ENCODE measurements at regions of chr1 and their contacts with region 1.

Region 1: GRCh38 chr1:88180449-88181108 is 503.5 kb upstream of the PKN2 start:
- DNase-seq: peak; percentile 54
- ATAC-seq: peak; percentile 95 to 96

Region 2: DNA sequence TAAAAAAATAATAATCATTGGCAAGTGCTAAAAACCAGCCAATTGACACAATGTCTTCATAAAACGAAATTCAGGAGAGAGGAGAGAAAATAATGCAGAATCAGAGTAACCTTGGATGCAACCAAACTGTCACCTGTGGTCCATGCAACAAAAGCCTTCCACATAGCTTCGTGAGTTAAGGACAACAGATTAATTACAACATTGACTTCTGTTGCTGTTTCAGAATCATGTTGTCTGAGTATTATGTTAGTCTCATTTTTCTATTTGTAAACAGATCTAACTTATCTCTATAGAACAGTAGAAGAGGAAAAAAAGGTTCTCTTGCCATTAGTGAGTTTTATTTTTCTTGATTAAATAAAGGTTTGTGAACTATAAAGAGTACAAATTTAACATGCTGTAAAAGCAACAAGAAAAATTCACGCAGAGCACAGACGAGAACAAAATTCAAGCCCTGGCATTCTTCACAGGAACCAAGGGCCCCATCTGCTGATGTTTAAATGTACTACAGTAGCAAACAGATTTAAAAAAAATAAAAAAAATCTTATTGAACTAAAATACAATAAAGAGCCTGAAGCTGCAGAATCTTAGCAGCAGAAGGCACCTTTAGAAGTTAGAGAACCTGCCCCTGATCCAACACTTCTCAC is 122.4 kb after region 1 on chr1:
- intact Hi-C with region 1: loop called in 1 of 2 experiments (anchors 5 kb)
- DNase-seq: no peak
- ATAC-seq: peak in 1 of 2 donors; percentile 63

Region 3: GRCh38 chr1:88549536-88549935 is 369.0 kb after region 1 on chr1:
- intact Hi-C with region 1: loop called in 1 of 2 experiments (anchors 5 kb)
- DNase-seq: no peak
- ATAC-seq: no peak